Posterior vena cava (tissue), 2 donors: ENCODE measurements at regions of chr17 and their contacts with region 1.

Region 1: DNA sequence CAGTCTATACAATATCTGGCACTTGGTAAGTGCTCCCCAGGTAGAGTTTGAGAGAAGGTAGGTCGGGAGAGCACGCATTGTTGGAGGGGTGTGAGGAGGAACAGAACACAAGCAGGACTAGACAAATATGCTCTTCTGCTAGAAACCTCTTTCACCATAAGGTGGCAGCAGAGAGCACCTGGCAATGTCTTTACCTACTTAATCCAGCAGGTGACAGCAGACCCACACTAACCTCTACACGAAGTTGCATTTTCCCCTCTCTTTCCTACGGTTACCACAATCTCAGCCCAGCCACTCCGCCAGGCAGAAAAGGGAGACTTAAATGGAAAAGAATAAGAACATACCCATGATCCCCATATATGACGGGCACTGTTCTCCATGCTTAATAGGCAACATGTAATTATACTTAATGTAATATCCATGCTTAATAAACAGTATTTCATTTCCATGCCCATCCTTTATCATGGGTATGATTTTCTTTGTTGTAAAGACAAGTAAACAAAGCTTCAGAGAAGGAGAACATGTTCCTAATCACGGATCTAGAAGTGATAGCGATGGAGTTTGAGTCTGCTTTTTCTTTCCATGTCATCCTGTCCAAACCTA is 55.1 kb upstream of the CCL2 start:
- DNase-seq: no peak

Region 2: GRCh38 chr17:32445074-32445415 is 1755.0 kb before region 1 on chr17:
- intact Hi-C with region 1: no loop called
- DNase-seq: no peak

Region 3: GRCh38 chr17:34254651-34255380 is 54.8 kb after region 1 on chr17 and contains the start of gene CCL2:
- intact Hi-C with region 1: loop called in 1 of 2 experiments (anchors 2 kb)
- DNase-seq: peak; percentile 86
- total RNA-seq, gene CCL2: 39.1 to 155 TPM

Region 4: GRCh38 chr17:34306466-34306865 is 106.4 kb after region 1 on chr17:
- intact Hi-C with region 1: loop called in 1 of 2 experiments (anchors 5 kb)
- DNase-seq: no peak

Region 5: DNA sequence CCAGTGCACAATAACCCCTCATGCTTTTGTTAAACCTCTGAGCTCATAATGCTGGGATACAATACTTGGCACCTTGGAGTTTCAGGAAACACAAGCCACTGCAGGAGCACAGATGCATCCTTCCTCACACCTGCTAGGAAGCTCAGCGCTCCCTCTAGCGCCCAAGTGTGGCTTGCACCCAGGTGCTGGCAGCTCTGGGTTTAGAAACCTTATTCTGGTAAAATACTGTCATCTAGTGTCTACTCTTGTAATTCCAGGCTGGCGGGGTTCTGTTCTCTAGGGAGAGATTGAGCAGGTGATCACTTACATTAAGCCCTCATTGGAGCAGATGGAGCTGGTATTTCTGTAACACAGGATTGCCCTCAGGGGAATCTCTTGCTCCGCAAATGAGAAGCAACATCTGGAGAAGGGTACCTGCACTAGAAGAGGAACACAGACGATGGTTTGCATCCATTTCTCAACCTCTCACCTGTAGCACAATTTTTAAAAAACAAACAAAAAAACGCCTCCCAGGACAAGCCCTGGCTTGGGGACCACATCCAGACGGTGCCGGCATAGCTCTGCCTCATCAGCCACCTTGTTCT is 161.5 kb after region 1 on chr17:
- intact Hi-C with region 1: loop called (anchors 1 to 5 kb)
- DNase-seq: peak; percentile 96